ENCODE measurements at regions of chr1 and their contacts with region 1.

Region 1: GRCh38 chr1:165697881-165698760 is at the start of gene ALDH9A1:
- DNase-seq: peak; percentile 89
- H3K4me3 Mint-ChIP-seq: peak within 1 kb of the TSS; percentile 97
- H3K27ac Mint-ChIP-seq: peak within 1 kb of the TSS; percentile 96
- H3K4me1 Mint-ChIP-seq: peaks cover 26% of the 10 kb centered on the region
- H3K27me3 Mint-ChIP-seq: no peaks in the 10 kb centered on the region
- total RNA-seq, gene ALDH9A1: 35.8 to 43.5 TPM

Region 2: GRCh38 chr1:165392634-165393571 is 305.2 kb before region 1 on chr1:
- CTCF ChIA-PET with region 1: no interaction called
- intact Hi-C with region 1: loop called (anchors 2 kb)
- DNase-seq: peak; percentile 91
- H3K4me3 Mint-ChIP-seq: peak overlapping the region; percentile 52
- H3K27ac Mint-ChIP-seq: peak overlapping the region; percentile 61
- H3K4me1 Mint-ChIP-seq: peaks cover 15% of the 10 kb centered on the region
- H3K27me3 Mint-ChIP-seq: peaks cover 54% of the 10 kb centered on the region

Region 3: DNA sequence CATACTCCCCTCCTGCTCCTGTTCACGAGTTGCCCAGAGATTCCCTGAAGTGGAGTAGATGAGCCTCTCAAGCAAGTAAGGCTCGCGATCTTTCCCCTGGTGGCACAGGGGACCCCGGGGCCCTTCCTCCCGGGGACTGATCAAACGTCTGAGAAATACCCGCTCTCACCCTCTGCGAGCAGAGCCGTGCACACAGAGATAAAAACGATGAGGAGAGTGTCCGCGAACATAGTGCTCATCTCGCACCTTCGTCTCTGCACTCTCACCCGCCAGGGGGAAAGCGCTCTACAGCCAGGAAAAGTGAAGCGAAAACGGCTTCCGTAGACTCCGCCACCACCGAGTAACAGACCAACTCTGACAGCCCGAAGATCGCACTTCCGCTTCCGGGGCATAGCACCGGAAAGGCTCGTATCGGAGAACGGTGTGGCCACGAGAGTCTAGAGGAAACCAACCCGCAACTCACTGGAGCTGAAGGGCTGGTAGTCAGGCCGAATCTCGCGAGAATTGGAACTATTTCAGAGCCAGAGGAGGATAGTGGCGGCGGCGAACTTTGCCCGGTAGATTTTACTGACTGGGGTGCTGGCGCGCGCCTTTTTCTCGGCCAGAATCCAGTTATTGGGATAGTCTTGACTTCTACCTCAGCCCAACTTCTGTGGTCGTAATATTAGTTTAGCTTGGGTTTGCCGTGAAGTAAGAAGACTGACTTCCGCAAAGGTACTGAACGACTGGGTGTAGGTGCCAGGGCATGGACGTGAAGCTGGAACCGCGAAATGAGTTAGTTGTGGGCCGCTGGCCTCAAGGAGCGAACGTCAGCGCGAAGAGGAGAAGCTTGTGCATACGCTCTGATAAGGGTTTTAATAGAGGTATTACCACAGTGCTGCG is 70.6 kb after region 1 on chr1 and contains the start of gene TMCO1:
- CTCF ChIA-PET with region 1: no interaction called
- intact Hi-C with region 1: loop called (anchors 1 kb)
- DNase-seq: peak; percentile 96
- H3K4me3 Mint-ChIP-seq: peak within 1 kb of the TSS; percentile 98
- H3K27ac Mint-ChIP-seq: peak within 1 kb of the TSS; percentile 97
- H3K4me1 Mint-ChIP-seq: peaks cover 49% of the 10 kb centered on the region
- H3K27me3 Mint-ChIP-seq: no peaks in the 10 kb centered on the region
- total RNA-seq, gene TMCO1: 50.5 to 50.7 TPM

Region 4: DNA sequence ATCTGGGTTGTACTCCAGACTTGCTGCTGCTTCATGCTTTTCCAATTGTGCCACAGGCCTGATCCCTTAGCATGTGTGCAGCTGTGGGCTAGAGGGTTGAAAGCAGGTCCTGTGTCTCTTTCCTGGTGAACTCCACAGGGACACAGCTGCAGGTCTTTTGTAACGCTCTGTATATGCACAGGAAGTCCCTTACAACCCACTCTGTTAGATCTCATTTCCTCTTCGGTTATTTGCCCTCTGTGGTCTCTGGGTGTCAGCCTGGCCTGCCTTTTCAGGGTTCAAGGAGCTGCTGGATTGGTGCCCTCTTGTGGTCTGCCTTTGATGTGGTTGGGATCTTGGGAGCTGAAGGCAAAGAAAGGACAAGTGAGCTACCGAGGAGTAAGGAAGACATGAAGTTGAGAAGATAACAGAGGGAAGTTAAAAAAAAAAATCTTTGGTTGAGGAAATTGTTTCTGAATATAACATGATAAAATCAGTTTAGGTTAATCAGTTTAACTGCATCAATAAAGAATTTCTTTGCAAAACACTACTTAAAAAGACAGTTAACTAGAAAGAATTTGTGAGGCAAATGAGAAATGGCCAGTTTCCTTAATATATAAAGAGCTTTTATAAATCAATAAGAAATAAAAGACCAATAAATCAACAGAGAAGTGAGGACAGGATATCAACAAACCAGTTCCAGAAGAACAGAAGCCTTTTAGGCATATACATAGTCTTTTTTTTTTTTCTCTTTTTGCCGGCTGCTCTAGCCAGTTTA is 173.4 kb after region 1 on chr1:
- CTCF ChIA-PET with region 1: no interaction called
- intact Hi-C with region 1: loop called (anchors 1 kb)
- DNase-seq: peak; percentile 83
- H3K4me3 Mint-ChIP-seq: no peak overlapping the region
- H3K27ac Mint-ChIP-seq: no peak overlapping the region
- H3K4me1 Mint-ChIP-seq: peaks cover 47% of the 10 kb centered on the region
- H3K27me3 Mint-ChIP-seq: peaks cover 1% of the 10 kb centered on the region

Region 5: DNA sequence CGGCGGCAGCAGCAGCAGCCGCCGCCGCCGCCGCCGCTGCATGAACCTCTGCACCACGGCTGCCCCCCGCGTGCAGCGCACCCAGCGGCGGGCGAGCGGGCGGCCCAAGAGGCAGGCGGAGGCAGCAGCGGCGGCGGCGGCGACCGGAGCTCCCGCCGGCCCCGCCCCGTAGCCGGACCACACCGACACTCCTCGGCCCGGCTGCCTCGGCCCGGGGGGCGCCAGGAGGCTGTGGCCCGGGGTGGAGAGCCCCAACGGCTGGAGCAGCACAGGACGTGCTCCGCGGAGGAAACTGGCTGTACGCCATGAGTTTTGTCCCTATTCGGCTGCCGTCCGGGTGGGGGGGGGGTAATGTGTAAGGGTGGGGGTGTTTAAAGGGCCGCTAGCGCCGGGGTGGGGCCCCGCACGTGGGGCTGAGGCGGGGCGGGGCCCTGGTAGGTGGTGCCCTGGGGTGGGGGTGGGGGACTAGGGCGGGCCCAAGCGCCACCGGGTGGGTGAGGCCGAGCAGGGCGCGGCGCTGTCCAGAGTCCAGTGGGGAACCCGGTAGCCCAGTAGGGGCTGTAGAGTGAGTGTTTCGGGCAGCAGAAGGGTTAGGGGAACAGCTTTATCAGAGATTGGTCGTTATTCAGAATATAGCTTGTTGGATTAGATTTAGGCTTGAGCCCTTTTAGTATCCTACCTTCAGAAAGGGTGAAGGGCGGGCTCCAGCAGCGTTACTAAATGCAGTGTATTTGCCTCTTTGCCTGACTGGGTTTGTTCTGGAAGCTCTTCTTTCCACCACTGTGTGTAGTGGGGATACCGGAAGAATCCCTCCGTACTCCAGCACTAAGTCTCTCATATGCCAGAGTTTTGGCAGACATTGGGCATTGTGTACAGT is 468.8 kb after region 1 on chr1 and contains the start of gene FAM78B:
- CTCF ChIA-PET with region 1: no interaction called
- intact Hi-C with region 1: loop called (anchors 10 kb)
- DNase-seq: peak; percentile 65
- H3K4me3 Mint-ChIP-seq: peak within 1 kb of the TSS; percentile 71
- H3K27ac Mint-ChIP-seq: no peak within 1 kb of the TSS
- H3K4me1 Mint-ChIP-seq: peaks cover 30% of the 10 kb centered on the region
- H3K27me3 Mint-ChIP-seq: peaks cover 55% of the 10 kb centered on the region
- total RNA-seq, gene FAM78B: 0.24 TPM in 1 of 2 experiments, not detected in the other

Region 6: GRCh38 chr1:166233750-166234366 is 535.7 kb after region 1 on chr1:
- CTCF ChIA-PET with region 1: no interaction called
- intact Hi-C with region 1: no loop called
- DNase-seq: no peak
- H3K4me3 Mint-ChIP-seq: no peak overlapping the region
- H3K27ac Mint-ChIP-seq: no peak overlapping the region
- H3K4me1 Mint-ChIP-seq: no peaks in the 10 kb centered on the region
- H3K27me3 Mint-ChIP-seq: no peaks in the 10 kb centered on the region